RWPE1 (cell line): ENCODE measurements at regions of chr19 and their contacts with region 1.

Region 1: DNA sequence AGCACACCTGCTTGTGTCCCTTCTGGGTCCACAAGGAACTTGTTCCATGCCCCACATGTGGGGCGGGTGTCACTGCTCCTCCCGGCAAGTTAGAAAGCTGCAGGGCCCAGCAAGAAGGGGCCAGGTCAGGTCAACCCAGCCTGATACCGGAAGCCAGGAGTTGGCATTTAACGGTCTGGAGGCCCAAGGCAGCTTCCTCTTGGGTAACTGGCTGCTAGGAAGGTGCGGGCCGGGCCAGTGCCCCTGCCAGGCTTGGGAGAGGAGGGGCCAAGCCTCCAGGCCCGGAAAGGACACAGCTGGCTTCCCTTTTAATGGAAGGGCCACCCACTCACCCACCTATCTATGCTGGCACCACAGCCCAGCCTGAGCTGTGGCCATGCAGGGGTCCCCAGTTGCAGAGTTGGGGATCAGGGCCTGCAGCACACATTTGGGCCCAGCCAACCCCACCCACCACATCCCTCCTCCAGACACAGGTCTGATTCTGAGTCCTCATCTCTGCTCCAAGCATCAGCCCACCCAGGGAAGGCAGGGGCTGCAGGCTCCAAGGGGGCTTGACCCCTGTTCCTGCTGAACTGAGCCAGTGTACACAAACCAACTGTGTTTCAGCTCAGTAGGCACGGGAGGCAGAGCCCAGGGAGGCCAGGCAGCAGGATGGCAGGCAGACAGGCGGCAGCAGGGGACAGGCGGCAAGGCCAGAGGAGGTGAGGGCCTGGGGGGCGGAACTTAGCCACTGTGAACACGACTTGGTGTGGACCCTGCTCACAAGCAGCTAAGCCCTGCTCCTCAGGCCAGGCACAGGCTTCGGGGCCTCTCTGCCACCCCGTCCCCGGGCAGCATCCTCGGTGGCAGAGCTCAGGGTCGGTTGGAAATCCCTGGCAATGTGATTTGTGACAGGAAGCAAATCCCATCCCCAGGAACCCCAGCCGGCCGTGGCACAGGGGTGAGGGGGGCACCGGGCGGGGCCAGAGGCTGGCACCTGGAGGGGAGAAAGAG is 40.8 kb downstream of the ZSWIM4 start:
- DNase-seq: no peak
- H3K27ac ChIP-seq: peak overlapping the region; percentile 100
- CTCF ChIP-seq: no peak

Region 2: DNA sequence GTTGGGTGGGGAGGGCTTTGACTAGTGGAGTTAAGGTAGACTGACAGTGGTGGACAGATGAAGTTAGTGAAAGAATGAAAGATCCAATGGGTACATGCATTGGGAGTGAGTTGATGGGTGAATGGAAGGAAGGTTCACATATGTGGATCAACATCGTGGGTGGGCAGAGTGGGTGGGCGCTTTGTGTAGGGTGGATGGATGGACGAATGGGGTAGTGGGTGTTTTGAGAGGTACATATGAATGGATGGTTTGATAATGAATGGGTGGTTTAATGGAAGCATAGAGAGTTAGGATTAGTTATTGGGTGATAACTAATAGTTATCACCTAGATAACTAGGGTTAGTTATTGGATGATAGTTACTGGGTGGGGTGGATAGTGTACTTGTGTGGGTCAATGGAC is 29.3 kb before region 1 on chr19:
- CTCF ChIA-PET with region 1: no interaction called
- POLR2A ChIA-PET with region 1: interaction called, 11 read pairs
- DNase-seq: no peak
- H3K27ac ChIP-seq: no peak overlapping the region
- CTCF ChIP-seq: no peak

Region 3: GRCh38 chr19:14031719-14032480 is 195.9 kb after region 1 on chr19 and contains the start of gene IL27RA:
- CTCF ChIA-PET with region 1: no interaction called
- POLR2A ChIA-PET with region 1: no interaction called
- DNase-seq: peak; percentile 54
- H3K27ac ChIP-seq: peak within 1 kb of the TSS; percentile 60
- CTCF ChIP-seq: peak; percentile 82